ENCODE measurements at regions of chr1 and their contacts with region 1.

Region 1: GRCh38 chr1:232630047-232630893 is at the start of gene SIPA1L2:
- DNase-seq: peak; percentile 86 to 92
- ATAC-seq: peak; percentile 85 to 89
- H3K4me3 ChIP-seq: peak within 1 kb of the TSS; percentile 79 to 94 (median 88)
- H3K27ac ChIP-seq: peak within 1 kb of the TSS; percentile 82 to 93 (median 92)
- H3K4me1 ChIP-seq: peaks cover 9 to 12% of the 10 kb centered on the region in 2 donors
- H3K27me3 ChIP-seq: no peaks in the 10 kb centered on the region
- CTCF ChIP-seq: peak in 4 of 5 experiments; percentile 13 to 53 (median 22)
- POLR2A ChIP-seq: peak; percentile 80 to 87
- total RNA-seq, gene SIPA1L2: 3.1 to 22.7 (median 3.9) TPM

Region 2: GRCh38 chr1:231866392-231867331 is 763.6 kb before region 1 on chr1:
- in situ Hi-C with region 1: loop called in 2 of 4 experiments (anchors 10 to 25 kb)
- intact Hi-C with region 1: loop called (anchors 2 kb)
- DNase-seq: no peak
- ATAC-seq: peak in 1 of 2 donors; percentile 42
- H3K4me3 ChIP-seq: no peak overlapping the region
- H3K27ac ChIP-seq: no peak overlapping the region
- H3K4me1 ChIP-seq: peaks cover 10 to 12% of the 10 kb centered on the region in 2 donors
- H3K27me3 ChIP-seq: no peaks in the 10 kb centered on the region
- CTCF ChIP-seq: peak; percentile 62 to 86 (median 75)
- POLR2A ChIP-seq: no peak

Region 3: GRCh38 chr1:232428786-232429530 is 201.3 kb before region 1 on chr1:
- in situ Hi-C with region 1: no loop called
- intact Hi-C with region 1: loop called (anchors 10 kb)
- DNase-seq: peak; percentile 29 to 38
- ATAC-seq: peak; percentile 95 to 97
- H3K4me3 ChIP-seq: no peak overlapping the region
- H3K27ac ChIP-seq: peak overlapping the region in 1 of 4 donors; percentile 32
- H3K4me1 ChIP-seq: peaks cover 23 to 31% of the 10 kb centered on the region in 2 donors
- H3K27me3 ChIP-seq: no peaks in the 10 kb centered on the region
- CTCF ChIP-seq: no peak
- POLR2A ChIP-seq: no peak

Region 4: DNA sequence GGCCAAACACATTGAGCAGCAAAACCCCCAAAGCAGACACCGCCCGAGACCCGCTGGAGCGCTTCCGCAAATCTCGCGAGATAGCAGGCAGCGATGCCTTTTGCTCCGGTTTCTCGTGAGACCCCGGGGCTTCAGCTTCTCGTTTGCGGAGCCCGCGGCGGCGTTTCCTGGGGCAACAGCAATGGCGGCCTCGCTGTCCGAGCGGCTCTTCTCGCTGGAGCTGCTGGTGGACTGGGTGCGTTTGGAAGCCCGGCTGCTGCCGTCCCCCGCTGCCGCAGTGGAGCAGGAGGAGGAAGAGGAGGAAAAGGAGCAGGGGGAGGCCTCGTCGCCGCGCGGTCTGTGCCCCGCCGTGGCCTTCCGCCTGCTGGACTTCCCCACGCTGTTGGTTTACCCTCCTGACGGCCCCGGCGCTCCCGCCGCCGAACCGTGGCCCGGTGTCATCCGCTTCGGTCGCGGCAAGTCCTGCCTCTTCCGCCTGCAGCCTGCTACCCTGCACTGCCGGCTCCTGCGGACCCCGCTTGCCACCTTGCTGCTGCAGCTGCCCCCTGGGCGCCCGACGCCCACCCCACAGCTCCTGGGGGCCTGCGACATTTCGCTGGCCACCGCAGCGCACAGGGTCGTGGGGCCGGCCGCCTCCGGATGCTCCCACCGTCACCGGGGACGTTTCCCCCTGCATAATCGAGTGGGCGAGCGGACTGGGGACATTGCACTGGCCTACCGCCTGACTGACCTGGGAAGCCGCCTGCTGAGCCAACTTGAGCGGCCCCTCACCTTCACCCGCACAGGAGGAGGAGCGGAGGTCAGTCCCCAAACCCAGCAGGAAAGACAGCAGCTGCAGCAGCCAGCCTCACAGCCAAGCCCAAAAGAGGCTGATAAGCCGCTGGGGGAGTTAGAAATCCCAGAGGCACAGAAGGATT is 175.3 kb after region 1 on chr1 and contains the start of gene MAP10:
- in situ Hi-C with region 1: no loop called
- intact Hi-C with region 1: loop called (anchors 5 kb)
- DNase-seq: peak; percentile 28 to 66
- ATAC-seq: peak; percentile 84 to 86
- H3K4me3 ChIP-seq: peak within 1 kb of the TSS; percentile 75 to 85 (median 76)
- H3K27ac ChIP-seq: peak within 1 kb of the TSS; percentile 78 to 83 (median 82)
- H3K4me1 ChIP-seq: peaks cover 28 to 54% of the 10 kb centered on the region in 2 donors
- H3K27me3 ChIP-seq: no peaks in the 10 kb centered on the region
- CTCF ChIP-seq: no peak
- POLR2A ChIP-seq: peak; percentile 23 to 34
- total RNA-seq, gene MAP10: 1.9 to 2.6 (median 2.3) TPM

Region 5: GRCh38 chr1:233025157-233025915 is 395.1 kb after region 1 on chr1:
- in situ Hi-C with region 1: loop called in 3 of 4 experiments (anchors 10 kb)
- intact Hi-C with region 1: loop called (anchors 2 kb)
- DNase-seq: peak; percentile 11 to 17
- ATAC-seq: no peak
- H3K4me3 ChIP-seq: no peak overlapping the region
- H3K27ac ChIP-seq: no peak overlapping the region
- H3K4me1 ChIP-seq: peaks cover 0 to 4% of the 10 kb centered on the region in 2 donors
- H3K27me3 ChIP-seq: no peaks in the 10 kb centered on the region
- CTCF ChIP-seq: peak in 3 of 5 experiments; percentile 17 to 63 (median 62)
- POLR2A ChIP-seq: no peak

Region 6: GRCh38 chr1:233240829-233241682 is 610.8 kb after region 1 on chr1:
- in situ Hi-C with region 1: loop called (anchors 10 to 25 kb)
- intact Hi-C with region 1: loop called (anchors 5 kb)
- DNase-seq: peak; percentile 30 to 34
- ATAC-seq: peak; percentile 60 to 76
- H3K4me3 ChIP-seq: peak overlapping the region in 2 of 4 donors; percentile 12 to 23
- H3K27ac ChIP-seq: no peak overlapping the region
- H3K4me1 ChIP-seq: no peaks in the 10 kb centered on the region
- H3K27me3 ChIP-seq: no peaks in the 10 kb centered on the region
- CTCF ChIP-seq: peak; percentile 52 to 84 (median 71)
- POLR2A ChIP-seq: no peak